ENCODE measurements at regions of chr1 and their contacts with region 1.

Region 1: DNA sequence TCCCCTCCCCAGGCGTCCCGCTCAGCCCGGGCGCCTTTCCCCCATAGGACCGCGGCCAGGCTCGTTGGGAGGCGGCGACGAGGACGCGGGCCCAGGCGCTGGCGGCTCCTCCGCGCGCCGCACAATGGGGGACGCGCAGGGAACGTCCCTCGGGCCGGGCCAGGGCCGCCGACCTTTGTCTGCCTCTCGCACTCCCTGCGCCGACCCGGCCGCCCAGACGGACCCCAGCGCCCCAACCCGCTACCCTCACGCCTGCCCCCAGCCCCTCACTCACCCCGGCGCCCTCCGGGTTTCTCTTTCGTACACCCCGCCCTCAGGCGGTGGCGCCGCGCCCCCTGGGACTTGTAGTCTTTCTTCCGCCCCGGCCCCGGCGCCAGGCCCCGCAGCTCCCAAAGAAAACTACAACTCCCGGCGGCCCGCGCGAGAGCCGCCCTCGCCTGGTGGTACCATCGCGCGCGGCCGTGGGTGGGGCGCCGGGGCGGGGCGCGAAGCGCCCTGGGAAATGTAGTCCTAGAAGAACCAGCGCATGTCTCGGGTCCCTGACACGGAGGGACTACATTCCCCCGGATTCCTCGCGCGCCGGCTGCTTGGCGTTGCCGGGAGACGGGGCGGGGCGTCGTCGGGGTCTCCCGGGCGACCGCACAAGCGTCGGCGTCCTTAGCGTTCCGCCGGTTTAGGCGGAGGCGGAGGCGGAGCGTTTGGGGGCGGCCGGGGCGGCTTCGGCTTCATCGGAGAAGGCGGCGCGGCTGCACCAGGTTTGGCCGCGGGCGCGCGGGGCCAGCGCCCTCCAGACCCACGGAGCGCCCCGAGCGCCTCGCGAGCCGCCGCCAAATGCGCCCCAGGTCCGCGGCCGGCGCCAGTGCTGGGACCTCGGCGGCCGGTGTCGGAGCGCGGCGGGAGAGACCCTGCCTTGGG is at the start of gene C1orf159:
- DNase-seq: peak; percentile 99
- ATAC-seq: peak; percentile 98 to 99 (median 99)
- H3K4me3 ChIP-seq: peak within 1 kb of the TSS; percentile 59 to 98 (median 94)
- H3K27ac ChIP-seq: peak within 1 kb of the TSS in 8 of 10 donors; percentile 79 to 87 (median 83)
- H3K4me1 ChIP-seq: peaks cover 0 to 11% (median 7%) of the 10 kb centered on the region in 9 donors
- H3K27me3 ChIP-seq: peaks cover 0 to 23% (median 8%) of the 10 kb centered on the region in 7 donors
- CTCF ChIP-seq: no peak
- total RNA-seq, gene C1orf159: 2.9 to 6.0 (median 3.5) TPM

Region 2: DNA sequence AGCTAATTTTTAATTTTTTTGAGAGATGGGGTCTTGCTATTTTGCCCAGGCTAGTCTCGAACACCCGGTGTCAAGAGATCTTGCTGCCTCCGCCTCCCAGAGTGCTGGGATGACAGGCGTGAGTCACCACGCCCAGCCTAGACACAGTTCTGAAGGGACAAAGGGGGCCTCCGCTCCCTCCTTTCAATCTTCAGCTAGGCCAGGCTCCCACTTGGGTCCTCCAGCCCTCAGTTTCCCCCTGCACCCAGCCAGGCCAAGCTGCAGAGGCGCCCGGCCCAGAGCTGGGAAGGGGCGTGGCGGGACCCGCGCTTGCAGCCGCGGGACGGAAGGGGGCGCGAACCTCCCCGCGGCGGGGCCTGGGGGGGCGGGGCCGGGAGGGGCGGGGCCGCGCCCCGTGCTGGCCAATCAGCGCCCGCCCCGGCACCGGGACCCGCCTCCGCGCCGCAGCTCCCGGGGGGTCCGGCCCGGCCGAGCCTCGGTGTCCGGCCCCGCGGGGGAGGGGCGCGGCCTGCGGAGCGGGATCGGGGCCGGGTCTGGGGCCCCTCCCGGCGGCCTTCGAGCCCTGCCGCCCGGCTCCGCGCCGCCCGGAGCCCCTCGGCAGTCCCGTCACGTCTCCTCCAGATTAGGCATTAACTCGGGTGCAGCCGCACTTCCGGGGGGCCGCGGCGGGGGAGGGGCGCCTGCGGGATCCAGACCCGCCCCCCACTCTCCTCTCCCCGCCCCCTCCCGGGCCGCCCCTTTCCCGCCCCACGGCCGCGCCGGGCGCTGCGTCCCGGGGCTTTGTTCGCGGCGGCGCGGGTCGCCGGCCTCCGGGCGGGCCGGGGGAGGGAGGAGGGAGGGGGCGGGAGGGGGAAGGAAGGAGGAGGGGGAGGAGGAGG is 96.7 kb before region 1 on chr1:
- intact Hi-C with region 1: loop called in 1 of 10 experiments (anchors 5 kb)
- DNase-seq: peak; percentile 78 to 88
- ATAC-seq: peak; percentile 69 to 94 (median 86)
- H3K4me3 ChIP-seq: peak overlapping the region in 9 of 10 donors; percentile 67 to 95 (median 78)
- H3K27ac ChIP-seq: peak overlapping the region; percentile 70 to 98 (median 96)
- H3K4me1 ChIP-seq: peaks cover 18 to 56% (median 29%) of the 10 kb centered on the region in 9 donors
- H3K27me3 ChIP-seq: peaks cover 0 to 39% (median 0%) of the 10 kb centered on the region in 7 donors
- CTCF ChIP-seq: peak; percentile 46 to 72 (median 57)

Region 3: DNA sequence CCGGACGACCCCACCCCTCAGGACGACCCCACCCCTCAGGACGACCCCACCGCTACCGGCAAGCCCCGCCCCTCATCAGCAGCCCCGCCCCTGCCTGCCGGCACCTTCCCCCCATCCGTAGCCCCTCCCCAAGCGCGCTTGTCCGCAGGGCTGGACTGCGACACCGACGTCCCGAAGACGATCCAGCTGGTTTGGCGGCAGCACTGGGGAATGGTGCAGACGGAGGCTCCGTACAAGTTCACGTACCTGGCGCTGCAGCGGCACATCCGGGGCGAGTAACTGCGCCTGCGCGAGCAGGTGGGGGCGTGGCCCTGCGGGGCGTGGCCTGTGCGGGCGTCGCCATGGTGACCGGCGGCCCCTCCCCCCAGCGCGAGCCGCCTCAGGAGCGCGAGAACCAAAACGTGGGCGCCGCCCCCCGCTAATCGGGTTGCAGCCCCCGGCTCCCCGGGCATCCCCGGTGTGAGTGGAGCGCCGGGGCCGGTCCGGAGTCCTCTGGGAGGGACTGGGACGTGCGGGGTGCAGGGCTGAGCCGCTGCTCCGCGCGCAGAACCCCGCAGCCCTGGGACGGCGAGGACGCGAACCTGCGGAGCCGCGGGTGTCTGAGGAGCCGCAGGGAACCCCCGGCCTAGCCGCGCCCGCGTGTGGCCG is 46.9 kb before region 1 on chr1:
- intact Hi-C with region 1: no loop called
- DNase-seq: peak; percentile 38 to 77
- ATAC-seq: peak; percentile 45 to 72 (median 58)
- H3K4me3 ChIP-seq: peak overlapping the region in 9 of 10 donors; percentile 35 to 57 (median 47)
- H3K27ac ChIP-seq: no peak overlapping the region
- H3K4me1 ChIP-seq: peaks cover 4 to 23% (median 15%) of the 10 kb centered on the region in 9 donors
- H3K27me3 ChIP-seq: peaks cover 26 to 76% (median 66%) of the 10 kb centered on the region in 7 donors
- CTCF ChIP-seq: no peak

Region 4: DNA sequence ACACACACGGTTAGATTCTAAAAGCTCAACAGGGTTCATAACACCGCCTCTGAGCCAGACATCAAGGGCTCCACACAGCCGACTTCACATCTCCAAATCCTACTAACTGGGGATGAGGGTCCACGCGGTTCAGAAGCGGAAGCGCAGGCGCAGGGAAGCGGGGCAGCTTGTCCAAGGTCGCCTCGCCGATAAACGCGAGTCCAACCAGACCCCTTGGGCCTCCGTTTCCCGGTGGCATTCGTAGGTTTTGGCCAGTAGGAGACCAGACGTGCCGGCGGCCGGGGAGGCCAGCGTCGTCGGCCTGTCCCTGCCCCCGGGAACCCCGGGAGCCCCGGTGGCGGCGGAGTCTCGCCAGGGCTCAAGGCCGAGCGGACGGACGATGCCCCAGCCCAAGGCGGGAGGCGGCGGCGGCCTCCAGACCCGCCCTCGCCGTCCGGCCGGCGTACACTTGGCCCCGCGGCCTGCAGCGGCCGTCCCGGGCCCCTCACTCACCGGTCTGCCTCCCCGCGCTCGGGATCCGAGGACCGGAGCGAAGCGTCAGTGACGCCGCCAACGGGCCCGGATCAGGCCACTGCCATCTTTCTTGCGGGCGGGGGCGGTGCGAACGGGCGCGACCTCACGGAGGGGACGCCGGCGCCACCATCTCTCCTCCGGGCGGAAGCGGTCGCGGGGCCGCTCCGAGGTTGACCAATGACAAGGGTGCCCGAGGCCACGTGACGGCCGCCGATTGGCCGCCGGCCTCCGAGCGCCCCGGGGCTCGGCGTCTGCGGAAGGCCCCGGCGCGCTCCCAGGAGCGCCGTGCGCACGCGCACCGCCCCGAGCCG is 115.6 kb after region 1 on chr1 and contains the start of gene SDF4:
- intact Hi-C with region 1: loop called in 3 of 10 experiments (anchors 2 to 5 kb)
- DNase-seq: peak; percentile 97
- ATAC-seq: peak; percentile 96 to 99 (median 98)
- H3K4me3 ChIP-seq: peak within 1 kb of the TSS; percentile 73 to 100 (median 96)
- H3K27ac ChIP-seq: peak within 1 kb of the TSS; percentile 92 to 99 (median 96)
- H3K4me1 ChIP-seq: peaks cover 11 to 48% (median 30%) of the 10 kb centered on the region in 9 donors
- H3K27me3 ChIP-seq: no peaks in the 10 kb centered on the region
- CTCF ChIP-seq: no peak
- total RNA-seq, gene SDF4: 95.6 to 174 (median 123) TPM

Region 5: GRCh38 chr1:1250786-1251284 is 134.8 kb after region 1 on chr1:
- intact Hi-C with region 1: loop called in 7 of 10 experiments (anchors 5 to 10 kb)
- DNase-seq: no peak
- ATAC-seq: peak in 2 of 8 donors; percentile 20 to 21
- H3K4me3 ChIP-seq: no peak overlapping the region
- H3K27ac ChIP-seq: no peak overlapping the region
- H3K4me1 ChIP-seq: peaks cover 0 to 5% (median 0%) of the 10 kb centered on the region in 9 donors
- H3K27me3 ChIP-seq: peaks cover 7 to 24% (median 20%) of the 10 kb centered on the region in 7 donors
- CTCF ChIP-seq: no peak

Region 6: DNA sequence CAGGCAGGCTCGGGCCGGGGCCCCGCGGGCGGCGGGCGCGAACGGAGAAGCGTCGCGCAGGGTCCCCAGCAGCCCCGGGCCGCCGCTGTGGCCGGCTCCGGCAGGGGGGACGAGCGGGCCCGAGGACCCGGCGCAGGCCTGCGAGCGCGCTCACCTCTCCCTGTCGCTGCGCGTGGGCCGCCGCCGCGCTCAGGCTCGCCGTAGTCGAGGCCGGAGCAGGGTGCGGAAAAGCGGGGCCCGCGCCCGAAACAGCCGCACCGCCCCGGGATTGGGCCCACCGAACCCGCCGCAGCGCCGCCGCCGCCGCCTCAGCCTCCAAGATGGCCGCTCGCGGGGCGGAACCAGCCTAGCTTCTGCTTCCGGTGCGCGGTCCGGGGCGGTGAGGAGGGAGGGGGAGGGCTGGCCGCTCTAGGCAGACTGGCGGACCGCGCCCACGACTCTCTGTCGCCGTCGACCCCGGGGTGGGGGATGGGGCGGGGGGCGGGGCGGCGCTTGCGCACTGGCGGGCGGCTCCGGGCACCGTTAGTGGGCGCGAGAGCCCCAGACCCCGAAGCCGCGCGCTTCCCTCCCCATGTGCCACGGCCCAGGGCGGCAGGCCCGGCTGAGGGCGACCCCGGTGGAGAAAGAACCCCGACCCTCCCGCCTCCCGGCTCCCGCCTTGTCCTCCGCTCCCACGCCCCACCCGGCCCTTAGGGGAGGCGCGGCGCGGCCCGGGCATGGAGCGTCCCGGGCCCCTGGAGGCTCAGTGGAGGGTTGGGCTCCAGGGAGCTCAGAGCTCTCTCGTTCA is 157.7 kb after region 1 on chr1 and contains the start of gene UBE2J2:
- intact Hi-C with region 1: no loop called
- DNase-seq: peak; percentile 94 to 95
- ATAC-seq: peak; percentile 96 to 98 (median 97)
- H3K4me3 ChIP-seq: peak within 1 kb of the TSS; percentile 81 to 99 (median 96)
- H3K27ac ChIP-seq: peak within 1 kb of the TSS; percentile 53 to 95 (median 92)
- H3K4me1 ChIP-seq: peaks cover 23 to 49% (median 41%) of the 10 kb centered on the region in 9 donors
- H3K27me3 ChIP-seq: no peaks in the 10 kb centered on the region
- CTCF ChIP-seq: peak in 4 of 9 donors; percentile 16 to 37 (median 35)
- total RNA-seq, gene UBE2J2: 23.5 to 41.9 (median 29.2) TPM

Region 7: DNA sequence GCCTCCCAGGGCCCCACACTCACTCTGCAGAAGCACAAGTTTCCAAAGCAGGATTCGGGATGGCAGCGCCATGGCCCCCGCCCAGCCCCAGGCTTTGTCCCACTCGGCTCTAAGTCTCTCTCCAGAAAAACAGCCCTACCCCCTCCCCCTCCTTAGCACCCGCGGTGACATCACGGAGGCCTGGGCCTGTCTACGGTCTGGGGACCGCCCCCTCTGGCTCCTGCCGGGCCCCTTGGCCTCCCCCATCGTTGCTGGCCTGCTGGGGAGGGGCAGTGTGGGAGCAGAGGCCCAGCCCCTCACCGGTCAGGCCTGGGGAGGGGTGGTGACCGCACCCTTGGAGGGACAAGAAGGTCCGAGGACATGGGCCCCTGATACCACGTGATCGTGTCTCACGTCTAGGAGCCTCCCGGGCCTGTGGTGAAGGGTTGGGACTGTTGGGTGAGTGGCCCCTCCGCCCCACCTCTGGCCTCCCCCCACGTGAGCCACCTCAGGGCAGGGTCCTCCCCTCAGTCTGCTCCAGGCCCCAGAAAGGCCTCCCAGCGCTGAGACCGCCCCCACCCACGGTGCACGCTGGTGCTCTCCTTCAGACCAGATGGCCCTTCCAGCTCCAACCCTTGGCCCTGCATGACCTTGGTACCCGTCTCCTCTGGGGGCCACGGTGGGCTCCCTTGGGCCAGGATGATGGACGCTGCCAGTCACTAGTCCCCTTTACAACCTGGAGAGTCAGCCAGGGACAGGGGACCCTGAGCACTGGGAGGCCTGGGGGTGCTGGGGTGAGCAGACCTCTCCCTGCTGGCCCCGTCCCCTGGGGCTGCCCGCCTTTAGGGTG is 242.6 kb after region 1 on chr1 and contains the start of gene MXRA8:
- intact Hi-C with region 1: loop called in 1 of 10 experiments (anchors 5 kb)
- DNase-seq: peak; percentile 75 to 80
- ATAC-seq: peak; percentile 27 to 77 (median 70)
- H3K4me3 ChIP-seq: peak within 1 kb of the TSS; percentile 19 to 69 (median 52)
- H3K27ac ChIP-seq: peak within 1 kb of the TSS; percentile 57 to 93 (median 85)
- H3K4me1 ChIP-seq: peaks cover 6 to 66% (median 33%) of the 10 kb centered on the region in 9 donors
- H3K27me3 ChIP-seq: peaks cover 0 to 86% (median 49%) of the 10 kb centered on the region in 7 donors
- CTCF ChIP-seq: no peak
- total RNA-seq, gene MXRA8: 7.2 to 23.3 (median 14.6) TPM

Measured in heart right ventricle (tissue), 16 donors.